IMR-90 (cell line): ENCODE measurements at regions of chr4 and their contacts with region 1.

Region 1: GRCh38 chr4:79551555-79551954 is 143.5 kb upstream of the GK2 start:
- DNase-seq: no peak
- ATAC-seq: no peak
- H3K4me3 ChIP-seq: no peak overlapping the region
- H3K27ac ChIP-seq: no peak overlapping the region
- H3K4me1 ChIP-seq: no peaks in the 10 kb centered on the region
- H3K27me3 ChIP-seq: no peaks in the 10 kb centered on the region
- CTCF ChIP-seq: no peak
- POLR2A ChIP-seq: no peak
- RAD21 ChIP-seq: no peak

Region 2: DNA sequence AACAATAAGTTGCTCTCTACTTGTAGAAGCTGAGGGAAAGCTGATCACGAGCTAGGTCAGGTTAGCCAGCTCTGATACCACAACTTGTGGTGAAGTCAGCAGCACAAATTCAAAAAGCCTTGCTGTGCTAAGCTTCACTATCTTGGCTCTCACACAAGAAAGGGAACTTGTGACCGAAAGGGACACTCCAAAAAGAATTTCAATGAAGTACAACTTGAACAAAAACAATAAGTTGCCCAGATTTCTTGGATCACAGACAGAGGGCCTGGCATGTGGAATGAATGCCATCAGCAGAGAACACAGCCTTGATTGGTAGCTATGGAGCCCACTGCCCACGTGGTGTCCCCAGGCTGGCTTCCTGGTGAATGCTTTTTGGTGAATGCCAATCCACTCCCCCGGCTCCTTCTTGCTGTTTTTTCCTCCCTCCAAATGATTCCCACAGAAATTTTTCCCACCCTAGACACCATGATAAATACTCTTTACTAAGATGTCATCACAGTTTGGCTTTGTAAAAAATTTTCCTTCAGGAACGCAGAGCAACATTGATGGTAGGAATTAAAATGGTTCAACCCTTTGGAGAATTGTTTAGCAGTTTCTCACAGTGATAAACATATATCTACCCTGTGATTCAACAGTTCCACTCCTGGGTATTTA is 917.4 kb before region 1 on chr4:
- CTCF ChIA-PET with region 1: no interaction called
- POLR2A ChIA-PET with region 1: no interaction called
- dilution Hi-C with region 1: no loop called
- in situ Hi-C with region 1: no loop called
- intact Hi-C with region 1: no loop called
- DNase-seq: no peak
- ATAC-seq: peak; percentile 60
- H3K4me3 ChIP-seq: no peak overlapping the region
- H3K27ac ChIP-seq: no peak overlapping the region
- H3K4me1 ChIP-seq: no peaks in the 10 kb centered on the region
- H3K27me3 ChIP-seq: no peaks in the 10 kb centered on the region; the same call in 1 of the 2 replicates
- CTCF ChIP-seq: no peak
- POLR2A ChIP-seq: no peak
- RAD21 ChIP-seq: no peak

Region 3: GRCh38 chr4:79540143-79540542 is 11.4 kb before region 1 on chr4:
- CTCF ChIA-PET with region 1: no interaction called
- POLR2A ChIA-PET with region 1: no interaction called
- dilution Hi-C with region 1: no loop called
- in situ Hi-C with region 1: no loop called
- intact Hi-C with region 1: loop called (anchors 2 kb)
- DNase-seq: no peak
- ATAC-seq: no peak
- H3K4me3 ChIP-seq: no peak overlapping the region
- H3K27ac ChIP-seq: no peak overlapping the region
- H3K4me1 ChIP-seq: no peaks in the 10 kb centered on the region
- H3K27me3 ChIP-seq: no peaks in the 10 kb centered on the region
- CTCF ChIP-seq: no peak
- POLR2A ChIP-seq: no peak
- RAD21 ChIP-seq: no peak